ENCODE measurements at regions of chr7 and their contacts with region 1.

Region 1: DNA sequence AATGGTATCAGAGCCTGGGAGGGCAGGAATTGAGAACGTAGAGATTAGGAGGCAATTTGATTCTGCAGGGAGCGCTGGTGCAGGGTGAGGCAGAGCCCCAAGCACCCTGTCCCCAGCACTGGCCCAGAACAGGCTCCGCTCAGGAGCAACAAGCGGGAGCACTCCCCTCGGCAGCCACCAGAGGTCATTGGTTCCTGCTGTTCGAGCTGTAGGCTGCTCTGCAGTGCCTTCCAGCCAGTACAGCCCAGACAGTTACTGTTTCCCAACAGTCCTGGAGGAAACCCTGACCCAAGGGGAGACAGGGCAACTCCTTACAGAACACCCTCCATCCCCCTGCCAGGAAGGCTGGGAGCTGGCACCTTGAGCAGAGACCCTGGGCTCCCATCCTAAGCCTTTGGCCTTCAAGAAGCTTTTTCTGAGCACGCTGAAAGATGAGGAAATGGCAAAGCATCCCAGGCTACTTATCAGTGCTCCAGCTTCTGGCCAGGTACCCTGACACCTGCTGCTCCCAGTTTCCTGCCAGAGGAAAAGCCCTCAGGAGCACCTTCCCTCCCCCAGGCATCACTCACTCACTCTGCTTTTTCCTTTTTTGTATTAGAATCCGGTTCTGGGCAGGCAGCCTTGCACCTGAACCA is 71.2 kb upstream of the EFCAB10 start:
- DNase-seq: peak; percentile 68 to 81
- H3K4me3 ChIP-seq: no peak overlapping the region
- H3K27ac ChIP-seq: no peak overlapping the region
- H3K4me1 ChIP-seq: peaks cover 0 to 30% (median 17%) of the 10 kb centered on the region in 4 donors
- H3K27me3 ChIP-seq: no peaks in the 10 kb centered on the region
- CTCF ChIP-seq: peak; percentile 79 to 91

Region 2: GRCh38 chr7:105531792-105532671 is 120.4 kb before region 1 on chr7 and contains the start of gene RINT1:
- intact Hi-C with region 1: no loop called
- DNase-seq: peak; percentile 89 to 94
- H3K4me3 ChIP-seq: peak within 1 kb of the TSS; percentile 91 to 98
- H3K27ac ChIP-seq: peak within 1 kb of the TSS; percentile 88 to 90
- H3K4me1 ChIP-seq: peaks cover 0 to 22% (median 16%) of the 10 kb centered on the region in 4 donors
- H3K27me3 ChIP-seq: no peaks in the 10 kb centered on the region
- CTCF ChIP-seq: peak; percentile 47 to 72

Region 3: GRCh38 chr7:105759670-105760550 is 107.4 kb after region 1 on chr7:
- intact Hi-C with region 1: loop called (anchors 5 kb)
- DNase-seq: peak in 1 of 2 donors; percentile 31
- H3K4me3 ChIP-seq: no peak overlapping the region
- H3K27ac ChIP-seq: no peak overlapping the region
- H3K4me1 ChIP-seq: no peaks in the 10 kb centered on the region
- H3K27me3 ChIP-seq: no peaks in the 10 kb centered on the region
- CTCF ChIP-seq: peak; percentile 54 to 60

Region 4: DNA sequence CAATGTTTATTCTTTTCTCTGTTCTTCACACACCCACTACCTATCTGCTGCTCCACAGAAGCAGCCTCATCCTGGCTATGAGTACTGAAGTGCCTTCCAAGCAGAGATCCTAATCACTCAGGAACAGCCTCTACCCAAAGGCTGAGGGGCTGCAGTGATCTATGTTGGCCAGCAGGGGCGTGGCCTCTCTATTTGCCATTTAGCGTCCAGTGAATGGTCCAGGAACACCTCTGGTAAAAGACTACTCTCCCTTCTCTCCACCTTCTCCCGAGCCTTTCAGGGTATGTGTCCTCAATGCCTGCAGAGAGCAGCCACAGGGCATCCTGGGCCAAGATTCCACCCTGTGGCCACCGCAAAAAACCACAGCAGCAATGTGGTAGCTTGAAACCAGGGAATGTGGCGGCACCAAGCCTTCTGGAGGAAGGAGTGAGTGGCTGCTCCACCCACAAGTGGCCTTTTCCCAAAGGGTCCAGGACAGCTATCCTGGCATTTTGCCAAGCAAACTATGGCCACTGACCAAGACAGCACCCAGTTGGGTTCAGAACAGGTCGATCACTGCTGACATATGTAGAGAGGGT is 388.8 kb after region 1 on chr7:
- intact Hi-C with region 1: loop called (anchors 5 kb)
- DNase-seq: no peak
- H3K4me3 ChIP-seq: no peak overlapping the region
- H3K27ac ChIP-seq: no peak overlapping the region
- H3K4me1 ChIP-seq: peaks cover 0 to 8% (median 2%) of the 10 kb centered on the region in 4 donors
- H3K27me3 ChIP-seq: peaks cover 0 to 8% of the 10 kb centered on the region in 2 donors
- CTCF ChIP-seq: peak; percentile 48 to 72

Region 5: DNA sequence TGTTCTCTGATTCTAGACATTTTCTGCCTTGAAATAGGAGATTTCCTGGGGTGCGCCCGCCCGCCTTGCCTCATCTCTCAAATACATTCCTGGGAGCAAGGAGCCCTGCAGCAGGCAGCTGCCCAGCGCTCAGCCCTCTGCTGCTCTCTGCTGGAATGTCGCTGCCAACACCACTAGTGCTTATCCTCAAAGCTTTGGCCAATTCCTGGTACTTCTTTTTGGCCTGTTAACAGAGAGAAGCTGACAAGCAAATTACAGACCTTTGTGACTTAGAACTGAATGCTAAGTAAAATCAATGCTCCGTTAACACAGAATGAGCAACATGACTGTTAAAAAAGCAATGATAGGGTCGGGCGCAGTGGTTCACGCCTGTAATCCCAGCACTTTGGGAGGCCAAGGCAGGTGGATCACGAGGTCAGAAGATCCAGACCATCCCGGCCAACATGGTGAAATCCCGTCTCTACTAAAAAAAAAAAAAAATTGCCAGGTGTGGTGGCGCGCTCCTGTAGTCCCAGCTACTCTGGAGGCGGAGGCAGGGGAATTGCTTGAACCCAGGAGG is 501.5 kb after region 1 on chr7:
- intact Hi-C with region 1: loop called (anchors 5 kb)
- DNase-seq: peak; percentile 76 to 90
- H3K4me3 ChIP-seq: no peak overlapping the region
- H3K27ac ChIP-seq: no peak overlapping the region
- H3K4me1 ChIP-seq: peaks cover 0 to 14% (median 6%) of the 10 kb centered on the region in 4 donors
- H3K27me3 ChIP-seq: no peaks in the 10 kb centered on the region
- CTCF ChIP-seq: peak; percentile 96 to 97

Measured in tibial artery (tissue), 4 donors.